ENCODE measurements at regions of chr9 and their contacts with region 1.

Region 1: DNA sequence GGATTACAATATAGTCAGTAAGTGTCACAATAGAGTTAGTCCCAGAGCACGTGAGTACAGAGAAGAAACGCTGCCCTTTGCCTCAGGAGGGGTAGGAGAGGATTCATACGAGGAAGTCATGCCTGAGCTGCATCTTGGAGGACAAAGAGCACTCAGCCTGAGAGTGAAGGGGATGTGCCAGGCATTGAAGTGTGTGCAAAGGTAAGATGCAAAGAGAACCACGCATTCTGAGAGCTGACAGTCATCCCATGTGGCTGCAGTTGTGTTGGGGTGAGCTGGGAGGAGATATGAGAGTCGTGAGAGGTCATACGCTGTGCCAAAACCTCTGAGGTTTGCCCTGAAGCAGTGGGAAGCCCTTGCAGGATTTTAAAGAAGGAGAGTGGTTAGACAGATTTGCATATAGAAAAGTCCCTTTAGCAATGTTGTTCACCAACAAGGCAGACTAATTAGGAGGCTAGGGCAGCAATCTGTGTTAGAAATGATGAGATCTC is 97.5 kb downstream of the PIP5K1B start:
- DNase-seq: peak; percentile 31
- H3K4me3 Mint-ChIP-seq: no peak overlapping the region
- H3K27ac Mint-ChIP-seq: no peak overlapping the region
- H3K4me1 Mint-ChIP-seq: peaks cover 18% of the 10 kb centered on the region
- H3K27me3 Mint-ChIP-seq: peaks cover 3% of the 10 kb centered on the region

Region 2: DNA sequence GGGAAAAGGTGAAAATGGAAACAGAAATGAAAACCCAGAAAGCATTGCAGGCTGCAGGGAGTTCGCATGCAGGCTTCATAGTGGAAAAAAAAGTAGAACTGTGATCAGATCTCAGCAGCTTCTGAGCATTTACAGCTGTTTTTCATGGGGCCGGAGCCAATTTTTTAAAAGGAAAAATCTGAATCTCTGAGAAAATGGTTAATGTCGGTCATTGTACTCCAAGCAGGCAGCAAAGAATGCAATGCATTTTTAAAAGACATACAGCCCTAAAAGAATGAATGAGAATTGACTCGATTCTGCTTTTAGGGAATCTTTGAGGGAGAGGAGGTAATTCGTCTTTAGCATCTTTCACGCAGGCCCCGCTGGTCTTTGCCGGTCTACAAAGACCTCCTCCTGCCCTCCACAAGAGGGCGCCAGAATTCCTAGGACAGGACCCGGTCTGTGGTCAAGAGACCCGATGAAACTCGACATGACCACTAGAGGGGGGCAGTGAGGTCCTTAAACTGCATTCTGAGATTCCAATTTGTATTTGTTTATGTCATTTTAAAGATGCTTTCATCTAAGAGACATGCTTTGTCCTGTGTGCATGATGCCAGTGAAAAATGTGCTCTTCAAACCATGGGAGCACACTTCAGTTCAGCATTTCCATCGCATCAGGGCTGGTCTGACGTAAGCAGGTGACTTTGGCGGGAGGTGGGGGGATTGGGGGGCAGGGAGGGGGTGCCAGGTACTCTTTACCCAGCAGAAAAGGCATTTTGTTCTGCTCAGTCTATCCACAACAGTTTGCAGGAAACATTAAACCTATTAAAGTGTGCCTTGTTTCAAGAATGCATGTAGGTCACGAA is 218.2 kb before region 1 on chr9:
- intact Hi-C with region 1: loop called (anchors 2 kb)
- DNase-seq: peak; percentile 74
- H3K4me3 Mint-ChIP-seq: no peak overlapping the region
- H3K27ac Mint-ChIP-seq: no peak overlapping the region
- H3K4me1 Mint-ChIP-seq: peaks cover 11% of the 10 kb centered on the region
- H3K27me3 Mint-ChIP-seq: peaks cover 6% of the 10 kb centered on the region

Region 3: DNA sequence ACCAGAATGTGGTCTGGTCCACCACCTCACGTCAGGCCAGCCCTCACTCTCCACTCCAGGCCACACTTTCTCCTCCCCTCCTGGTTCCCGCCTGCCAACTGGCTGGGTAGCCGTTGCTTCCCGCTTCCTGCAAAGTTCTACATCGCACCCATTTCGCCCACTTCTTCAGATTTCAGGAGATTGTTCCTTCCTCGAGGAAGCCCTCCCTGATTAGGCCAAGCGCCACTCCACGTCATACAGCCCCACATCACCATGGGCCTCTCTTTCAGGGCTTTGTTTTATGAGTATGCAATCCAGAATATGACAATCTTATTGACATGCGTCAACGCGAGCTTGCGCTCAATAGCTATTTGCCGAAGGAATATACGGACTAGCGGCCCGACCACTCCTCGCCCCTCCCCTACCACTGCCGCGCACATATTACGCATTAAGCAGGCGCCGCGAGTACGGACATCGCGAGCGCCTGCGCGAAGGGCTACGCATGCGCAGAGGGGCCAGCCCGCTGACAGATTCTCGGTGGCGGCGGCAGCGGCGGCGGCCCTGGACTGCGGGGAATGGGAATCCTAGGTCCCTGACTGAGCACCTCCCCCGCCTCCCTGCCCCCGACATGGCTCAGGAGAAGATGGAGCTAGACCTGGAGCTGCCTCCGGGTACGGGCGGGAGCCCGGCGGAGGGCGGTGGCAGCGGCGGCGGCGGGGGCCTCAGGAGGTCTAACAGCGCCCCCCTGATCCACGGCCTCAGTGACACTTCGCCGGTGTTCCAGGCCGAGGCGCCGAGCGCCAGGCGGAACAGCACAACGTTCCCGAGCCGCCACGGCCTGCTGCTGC is 22.8 kb before region 1 on chr9:
- intact Hi-C with region 1: loop called (anchors 1 kb)
- DNase-seq: peak; percentile 89
- H3K4me3 Mint-ChIP-seq: no peak overlapping the region
- H3K27ac Mint-ChIP-seq: no peak overlapping the region
- H3K4me1 Mint-ChIP-seq: peaks cover 4% of the 10 kb centered on the region
- H3K27me3 Mint-ChIP-seq: no peaks in the 10 kb centered on the region

Region 4: DNA sequence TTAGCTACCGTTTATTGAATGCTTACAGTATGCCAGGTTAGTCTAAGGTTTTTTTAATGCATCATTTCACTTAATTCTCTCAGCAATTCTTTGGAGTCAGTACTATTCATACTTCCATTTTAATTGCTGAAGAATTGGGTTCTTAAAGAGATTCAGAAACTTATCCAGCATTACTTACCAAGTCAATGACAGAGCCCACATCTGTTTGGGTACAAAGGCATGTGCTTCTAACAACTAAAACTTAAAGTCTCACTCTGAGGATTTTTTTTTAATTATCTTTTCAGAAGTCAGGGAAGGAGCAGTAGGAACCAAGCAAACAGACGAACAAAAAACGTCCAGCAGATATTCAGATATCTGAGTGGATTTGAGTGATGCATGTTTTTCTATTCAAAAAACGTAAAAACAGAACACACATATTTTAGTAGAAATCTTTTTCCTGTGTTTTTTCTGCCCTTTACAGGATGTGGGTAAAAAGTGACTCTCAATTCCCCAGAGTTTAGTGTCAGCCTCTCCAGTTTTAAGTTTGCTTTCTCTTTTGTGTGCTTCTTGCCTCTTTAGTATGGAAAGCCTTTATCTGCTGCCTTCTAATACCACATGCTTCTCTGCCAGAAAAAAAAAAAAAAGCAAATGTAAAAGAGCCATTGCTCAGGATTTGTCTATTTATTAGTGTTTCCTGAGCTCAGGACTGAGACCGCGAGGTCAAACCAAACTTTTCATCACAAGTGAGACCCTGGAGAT is 93.3 kb after region 1 on chr9:
- intact Hi-C with region 1: loop called (anchors 2 kb)
- DNase-seq: no peak
- H3K4me3 Mint-ChIP-seq: peak overlapping the region; percentile 70
- H3K27ac Mint-ChIP-seq: peak overlapping the region; percentile 84
- H3K4me1 Mint-ChIP-seq: peaks cover 51% of the 10 kb centered on the region
- H3K27me3 Mint-ChIP-seq: no peaks in the 10 kb centered on the region

Region 5: GRCh38 chr9:68919661-68920060 is 117.1 kb after region 1 on chr9:
- intact Hi-C with region 1: no loop called
- DNase-seq: no peak
- H3K4me3 Mint-ChIP-seq: no peak overlapping the region
- H3K27ac Mint-ChIP-seq: no peak overlapping the region
- H3K4me1 Mint-ChIP-seq: peaks cover 45% of the 10 kb centered on the region
- H3K27me3 Mint-ChIP-seq: peaks cover 3% of the 10 kb centered on the region

Region 6: DNA sequence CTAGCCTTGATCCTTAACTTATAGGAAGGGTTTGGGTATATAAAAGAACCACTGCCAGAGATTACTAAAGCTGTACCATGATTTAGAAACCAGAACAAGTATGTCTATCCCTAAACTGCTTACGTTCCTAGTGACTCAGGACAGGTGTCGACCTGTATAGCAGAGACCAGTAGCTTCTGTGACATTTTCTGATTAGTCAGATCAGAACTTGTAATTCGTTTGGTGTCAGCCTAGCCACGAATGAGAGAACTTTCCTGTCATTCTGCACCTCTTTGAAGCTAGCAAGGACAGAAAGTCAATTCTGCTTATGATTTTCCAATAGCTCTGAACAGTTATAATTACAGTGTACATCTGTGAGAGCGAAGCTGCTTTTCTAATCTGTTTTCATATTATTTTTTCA is 171.9 kb after region 1 on chr9:
- intact Hi-C with region 1: loop called (anchors 1 kb)
- DNase-seq: peak; percentile 22
- H3K4me3 Mint-ChIP-seq: peak overlapping the region; percentile 60
- H3K27ac Mint-ChIP-seq: peak overlapping the region; percentile 87
- H3K4me1 Mint-ChIP-seq: peaks cover 69% of the 10 kb centered on the region
- H3K27me3 Mint-ChIP-seq: no peaks in the 10 kb centered on the region

Measured in activated T-helper 1 cell treated with anti-CD3 and anti-CD28 coated beads, Interleukin-12 subunit alpha, Interleukin-12 subunit beta, Interleukin-2, Interleukin-4 antibody, amounts not matched to agents 30 ng/mL and 10 ng/mL and 1 ng/mL, durations not matched to agents 14 hours and 24 hours and 36 hours (primary cell).